ENCODE measurements at regions of chr17 and their contacts with region 1.

Region 1: DNA sequence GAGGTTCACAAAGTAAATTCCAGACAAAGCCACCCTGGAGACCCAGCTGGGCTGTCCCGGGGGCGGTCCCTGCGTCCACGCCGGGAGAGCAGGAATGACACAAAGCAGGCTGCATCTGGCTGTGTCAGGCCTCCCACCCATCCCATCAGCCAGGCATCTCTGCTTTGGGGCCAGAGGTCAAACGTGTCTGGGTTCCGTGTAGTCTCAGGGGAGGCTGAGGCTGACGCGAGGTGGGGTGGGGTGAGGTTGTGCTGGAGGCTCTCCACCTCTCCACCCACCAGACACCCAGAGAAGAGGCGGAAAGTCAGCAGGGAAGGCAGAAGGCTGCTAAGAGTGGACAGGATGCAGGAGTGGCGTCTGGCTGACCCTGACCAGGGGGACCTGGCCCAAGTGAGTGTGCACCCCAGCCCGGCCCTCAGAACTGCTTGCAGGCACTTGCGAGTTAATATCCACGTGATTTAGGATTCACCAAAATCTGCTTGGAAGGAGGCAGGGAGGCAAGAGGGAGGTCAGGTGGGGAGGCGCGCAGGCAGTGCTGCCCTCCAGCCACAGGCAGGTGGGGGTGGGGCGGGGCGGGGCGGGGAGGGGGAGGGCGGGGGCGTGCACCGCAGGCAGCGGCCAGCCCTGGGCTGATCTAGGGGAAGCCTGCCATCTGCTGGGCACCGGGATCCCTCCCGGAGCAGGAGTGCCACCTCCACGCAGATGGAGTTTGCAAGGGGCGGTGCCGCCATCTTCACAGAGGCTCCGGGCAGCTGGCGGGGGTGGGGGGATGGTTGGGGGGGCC is 44.3 kb downstream of the TBC1D16 start:
- DNase-seq: peak; percentile 85
- ATAC-seq: peak; percentile 58
- H3K4me3 ChIP-seq: peak overlapping the region; percentile 51 to 77 (median 62); a peak in 4 of 6 replicates
- H3K27ac ChIP-seq: peak overlapping the region; percentile 98
- H3K4me1 ChIP-seq: peaks cover 90% of the 10 kb centered on the region
- H3K27me3 ChIP-seq: no peaks in the 10 kb centered on the region
- CTCF ChIP-seq: peak; percentile 81
- EP300 ChIP-seq: no peak
- POLR2A ChIP-seq: no peak
- RAD21 ChIP-seq: no peak; the same call in 1 of the 2 replicates

Region 2: GRCh38 chr17:79681101-79681621 is 310.2 kb before region 1 on chr17:
- CTCF ChIA-PET with region 1: no interaction called
- POLR2A ChIA-PET with region 1: no interaction called
- in situ Hi-C with region 1: no loop called
- intact Hi-C with region 1: no loop called
- DNase-seq: no peak
- ATAC-seq: peak; percentile 54
- H3K4me3 ChIP-seq: no peak overlapping the region
- H3K27ac ChIP-seq: no peak overlapping the region
- H3K4me1 ChIP-seq: no peaks in the 10 kb centered on the region
- H3K27me3 ChIP-seq: peaks cover 41 to 91% of the 10 kb centered on the region in 2 experiments
- CTCF ChIP-seq: no peak
- EP300 ChIP-seq: no peak
- POLR2A ChIP-seq: no peak
- RAD21 ChIP-seq: no peak

Region 3: GRCh38 chr17:79796763-79797491 is 194.4 kb before region 1 on chr17 and contains the start of gene CBX8:
- CTCF ChIA-PET with region 1: no interaction called
- POLR2A ChIA-PET with region 1: interaction called, 98 read pairs
- in situ Hi-C with region 1: no loop called
- intact Hi-C with region 1: loop called (anchors 2 kb)
- DNase-seq: peak; percentile 99
- ATAC-seq: peak; percentile 69
- H3K4me3 ChIP-seq: peak within 1 kb of the TSS; percentile 85 to 94 (median 86)
- H3K27ac ChIP-seq: peak within 1 kb of the TSS; percentile 87
- H3K4me1 ChIP-seq: peaks cover 67% of the 10 kb centered on the region
- H3K27me3 ChIP-seq: peaks cover 28 to 49% of the 10 kb centered on the region in 2 experiments
- CTCF ChIP-seq: peak; percentile 72
- EP300 ChIP-seq: peak in 1 of 2 experiments; percentile 32; a peak in 2 of 4 replicates
- POLR2A ChIP-seq: peak; percentile 78 to 92
- RAD21 ChIP-seq: peak; percentile 74
- total RNA-seq, gene CBX8: 12.0 and 12.6 TPM in 2 replicates

Region 4: DNA sequence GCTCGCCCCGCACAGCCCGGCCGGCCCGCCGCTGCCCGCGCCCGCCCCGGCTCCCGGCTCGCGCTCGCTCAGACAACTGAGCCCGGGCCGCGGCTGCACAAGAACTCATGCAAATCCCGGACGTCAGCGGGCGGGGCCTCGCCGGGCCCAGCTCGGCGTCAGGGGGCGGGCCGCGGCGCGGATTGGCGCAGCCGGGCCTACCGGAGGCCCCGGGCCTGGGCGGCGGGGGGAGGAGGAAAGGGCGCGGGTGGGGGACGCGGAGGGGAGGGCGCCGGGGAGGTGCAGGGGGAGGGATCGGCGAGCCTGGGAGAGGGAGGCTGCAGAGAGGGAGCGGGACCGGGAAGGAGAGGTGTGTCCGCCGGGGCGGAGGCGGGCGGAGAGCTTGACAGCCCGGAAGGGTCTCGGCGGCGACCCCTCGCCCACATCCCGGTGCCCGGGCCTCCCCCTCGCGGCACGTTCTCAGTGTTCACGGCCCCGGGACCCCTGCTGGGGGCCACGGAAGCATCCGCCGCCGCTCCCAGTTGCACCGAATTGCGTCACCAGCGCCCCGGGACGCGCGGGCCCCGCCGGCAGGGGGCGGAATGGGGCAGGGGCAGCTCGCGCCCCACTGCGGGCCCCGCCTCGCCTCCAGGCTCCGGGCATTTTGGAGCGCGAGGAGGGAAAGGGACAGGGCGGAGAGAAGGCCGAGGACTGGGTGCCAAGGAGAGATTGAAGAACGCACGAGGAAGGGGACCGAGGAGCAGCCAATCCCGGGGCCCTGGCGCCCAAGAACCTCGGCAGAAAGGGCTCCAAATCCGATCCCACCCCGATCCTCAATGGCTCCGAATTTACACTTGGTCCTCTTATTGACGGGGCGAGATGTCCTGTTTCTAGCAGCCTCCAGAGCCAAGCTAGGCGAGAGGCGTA is 151.7 kb before region 1 on chr17 and contains the start of gene CBX4:
- CTCF ChIA-PET with region 1: interaction called, 6 read pairs
- POLR2A ChIA-PET with region 1: interaction called, 333 read pairs
- in situ Hi-C with region 1: loop called (anchors 5 kb)
- intact Hi-C with region 1: loop called (anchors 2 kb)
- DNase-seq: peak; percentile 92
- ATAC-seq: peak; percentile 44
- H3K4me3 ChIP-seq: peak within 1 kb of the TSS; percentile 77 to 100 (median 87)
- H3K27ac ChIP-seq: peak within 1 kb of the TSS; percentile 71
- H3K4me1 ChIP-seq: peaks cover 68% of the 10 kb centered on the region
- H3K27me3 ChIP-seq: no peaks in the 10 kb centered on the region; a peak in 1 of 5 replicates
- CTCF ChIP-seq: peak; percentile 89
- EP300 ChIP-seq: peak in 1 of 2 experiments; percentile 51; a peak in 1 of 4 replicates
- POLR2A ChIP-seq: peak in 1 of 2 experiments; percentile 63; a peak in 2 of 4 replicates
- RAD21 ChIP-seq: peak; percentile 95
- total RNA-seq, gene CBX4: 17.1 and 25.8 TPM in 2 replicates

Region 5: GRCh38 chr17:79925242-79925957 is 65.9 kb before region 1 on chr17:
- CTCF ChIA-PET with region 1: no interaction called
- POLR2A ChIA-PET with region 1: interaction called, 76 read pairs
- in situ Hi-C with region 1: loop called (anchors 5 kb)
- intact Hi-C with region 1: loop called (anchors 1 kb)
- DNase-seq: no peak
- ATAC-seq: peak; percentile 4
- H3K4me3 ChIP-seq: peak overlapping the region in 1 of 3 experiments; percentile 23; a peak in 1 of 6 replicates
- H3K27ac ChIP-seq: peak overlapping the region; percentile 68
- H3K4me1 ChIP-seq: peaks cover 65% of the 10 kb centered on the region
- H3K27me3 ChIP-seq: peaks cover 3 to 4% of the 10 kb centered on the region in 2 experiments; a peak in 3 of 5 replicates
- CTCF ChIP-seq: 0 out of 2 replicates have a peak, but pooled peaks have one; percentile 16
- EP300 ChIP-seq: no peak
- POLR2A ChIP-seq: no peak
- RAD21 ChIP-seq: no peak

Region 6: DNA sequence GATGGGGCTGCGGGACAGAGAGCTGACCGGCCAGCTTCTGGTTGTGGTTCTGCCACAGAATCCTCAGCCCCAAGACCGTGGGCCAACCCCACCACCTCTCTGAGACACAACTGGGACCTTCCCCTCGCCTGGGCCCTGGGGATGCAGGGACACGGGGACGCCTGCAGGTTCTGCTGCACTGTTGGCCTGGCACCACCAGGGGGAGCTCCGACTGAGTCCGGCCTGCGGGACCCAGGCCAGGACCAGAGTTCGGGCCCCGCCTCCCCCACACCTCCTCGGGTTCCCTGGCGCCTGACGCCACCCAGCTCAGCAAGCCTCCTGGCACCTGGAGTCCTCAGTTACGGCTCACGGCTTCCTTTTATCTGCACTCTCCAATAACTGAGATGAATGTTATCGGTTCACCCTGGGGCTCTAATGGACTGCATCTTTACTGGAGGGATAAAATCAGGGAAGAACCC is 17.1 kb after region 1 on chr17:
- CTCF ChIA-PET with region 1: no interaction called
- POLR2A ChIA-PET with region 1: interaction called, 111 read pairs
- in situ Hi-C with region 1: no loop called
- intact Hi-C with region 1: no loop called
- DNase-seq: peak; percentile 78
- ATAC-seq: peak; percentile 79
- H3K4me3 ChIP-seq: no peak overlapping the region
- H3K27ac ChIP-seq: no peak overlapping the region
- H3K4me1 ChIP-seq: peaks cover 24% of the 10 kb centered on the region
- H3K27me3 ChIP-seq: no peaks in the 10 kb centered on the region
- CTCF ChIP-seq: peak; percentile 98
- EP300 ChIP-seq: no peak
- POLR2A ChIP-seq: no peak
- RAD21 ChIP-seq: peak; percentile 99

Region 7: DNA sequence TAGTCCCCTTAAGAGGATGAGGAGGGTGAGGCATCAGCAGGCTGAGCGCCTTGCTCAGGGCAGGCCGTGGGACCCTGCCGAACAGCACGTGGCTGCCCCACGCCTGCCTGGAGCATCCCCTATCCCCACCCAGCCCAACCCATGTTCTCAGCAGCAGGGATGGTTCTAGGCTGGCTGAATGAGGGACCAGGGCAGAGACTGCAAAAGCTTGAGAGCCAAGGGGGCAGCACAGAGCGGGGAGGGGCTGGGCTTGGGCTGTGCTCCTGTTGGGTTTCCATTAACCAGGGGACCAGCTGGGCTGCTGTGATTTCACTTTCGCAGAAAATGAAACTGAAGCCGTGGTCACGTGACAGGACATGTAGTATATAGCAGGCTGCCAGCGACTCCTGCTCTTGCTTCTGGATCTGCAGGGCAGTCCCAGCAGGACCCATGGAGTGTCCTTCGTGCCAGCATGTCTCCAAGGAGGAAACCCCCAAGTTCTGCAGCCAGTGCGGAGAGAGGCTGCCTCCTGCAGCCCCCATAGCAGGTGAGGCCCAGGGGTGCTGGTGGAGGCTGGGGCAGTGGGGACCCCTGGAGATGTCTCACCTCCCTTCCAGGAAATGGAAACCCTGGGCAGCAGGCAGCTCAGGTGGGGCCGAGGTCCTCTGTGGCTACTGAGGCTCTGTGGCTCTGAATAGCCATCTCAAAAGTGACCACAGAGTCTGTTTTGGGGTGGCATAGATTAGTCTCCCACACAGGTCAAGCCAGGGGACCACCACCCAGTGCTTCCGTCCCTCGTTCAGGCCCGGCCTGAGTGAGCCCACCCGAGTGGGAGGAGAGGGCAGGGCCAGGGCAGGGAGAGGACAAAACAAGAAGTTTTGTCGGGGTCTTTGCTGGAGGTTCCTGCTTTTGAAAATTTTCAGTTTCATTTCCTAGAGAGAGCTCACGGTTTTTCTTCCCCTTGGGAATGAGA is 272.2 kb after region 1 on chr17:
- CTCF ChIA-PET with region 1: no interaction called
- POLR2A ChIA-PET with region 1: interaction called, 13 read pairs
- in situ Hi-C with region 1: no loop called
- intact Hi-C with region 1: no loop called
- DNase-seq: peak; percentile 98
- ATAC-seq: peak; percentile 82
- H3K4me3 ChIP-seq: peak overlapping the region; percentile 68 to 89 (median 75)
- H3K27ac ChIP-seq: peak overlapping the region; percentile 54
- H3K4me1 ChIP-seq: peaks cover 50% of the 10 kb centered on the region
- H3K27me3 ChIP-seq: no peaks in the 10 kb centered on the region; a peak in 1 of 5 replicates
- CTCF ChIP-seq: peak; percentile 71
- EP300 ChIP-seq: 0 out of 4 replicates have a peak, but pooled peaks of 1 of the 2 experiments have one; percentile 9
- POLR2A ChIP-seq: peak; percentile 99 to 100
- RAD21 ChIP-seq: peak; percentile 78